Body of pancreas (tissue), 4 donors: ENCODE measurements at regions of chr10 and their contacts with region 1.

Region 1: GRCh38 chr10:27319752-27320561 is 79.4 kb upstream of the ACBD5 start:
- DNase-seq: peak; percentile 27 to 74 (median 52)
- ATAC-seq: peak; percentile 83
- H3K4me3 ChIP-seq: peak overlapping the region in 1 of 2 donors; percentile 12
- H3K27ac ChIP-seq: peak overlapping the region in 1 of 4 donors; percentile 48
- H3K4me1 ChIP-seq: no peaks in the 10 kb centered on the region
- H3K27me3 ChIP-seq: no peaks in the 10 kb centered on the region
- CTCF ChIP-seq: no peak
- POLR2A ChIP-seq: peak in 1 of 3 donors; percentile 15

Region 2: DNA sequence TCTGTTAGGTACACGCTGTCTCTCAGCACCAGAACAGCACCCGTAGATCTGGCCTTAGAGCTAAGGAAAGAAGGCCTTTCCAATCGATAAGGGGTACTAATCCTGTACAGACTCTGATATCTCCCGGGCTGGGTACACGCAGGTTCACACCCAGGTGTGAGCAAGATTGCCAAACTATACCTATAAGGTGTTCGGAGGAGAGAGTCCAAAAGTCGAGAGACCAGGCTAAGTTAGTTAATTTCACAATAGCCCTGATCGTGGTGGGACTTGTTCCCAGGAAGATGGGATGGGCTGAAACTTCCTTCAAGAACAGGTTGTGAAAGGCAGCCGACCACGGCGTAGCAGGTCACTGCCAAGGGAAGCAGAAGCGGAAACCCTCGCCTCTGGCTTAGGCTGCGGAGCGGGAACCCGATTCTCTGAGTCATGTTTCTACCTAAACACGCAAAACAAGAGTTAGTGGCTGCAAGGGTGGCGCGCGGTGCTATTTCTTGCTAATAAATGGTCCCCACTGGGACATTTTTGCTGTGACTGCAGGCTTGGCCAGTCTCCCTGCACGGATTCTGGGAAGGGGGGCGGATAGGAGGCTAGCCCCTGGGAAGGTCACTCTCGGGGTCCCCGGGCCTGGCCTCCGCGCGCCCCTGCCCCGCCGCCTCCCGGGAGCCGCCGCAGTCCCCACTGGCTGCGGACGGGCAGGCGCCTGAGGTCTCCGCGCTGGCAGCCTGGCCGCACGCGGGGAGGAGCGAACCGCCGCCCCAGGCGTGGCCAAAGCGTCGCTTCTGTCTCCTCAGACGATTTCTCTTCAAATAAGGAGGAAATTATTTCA is 697.9 kb before region 1 on chr10:
- intact Hi-C with region 1: loop called (anchors 10 kb)
- DNase-seq: peak; percentile 34 to 68 (median 53)
- ATAC-seq: peak; percentile 80
- H3K4me3 ChIP-seq: peak overlapping the region in 1 of 2 donors; percentile 27
- H3K27ac ChIP-seq: peak overlapping the region in 2 of 4 donors; percentile 13 to 58
- H3K4me1 ChIP-seq: peaks cover 6% of the 10 kb centered on the region
- H3K27me3 ChIP-seq: no peaks in the 10 kb centered on the region
- CTCF ChIP-seq: no peak
- POLR2A ChIP-seq: no peak

Region 3: DNA sequence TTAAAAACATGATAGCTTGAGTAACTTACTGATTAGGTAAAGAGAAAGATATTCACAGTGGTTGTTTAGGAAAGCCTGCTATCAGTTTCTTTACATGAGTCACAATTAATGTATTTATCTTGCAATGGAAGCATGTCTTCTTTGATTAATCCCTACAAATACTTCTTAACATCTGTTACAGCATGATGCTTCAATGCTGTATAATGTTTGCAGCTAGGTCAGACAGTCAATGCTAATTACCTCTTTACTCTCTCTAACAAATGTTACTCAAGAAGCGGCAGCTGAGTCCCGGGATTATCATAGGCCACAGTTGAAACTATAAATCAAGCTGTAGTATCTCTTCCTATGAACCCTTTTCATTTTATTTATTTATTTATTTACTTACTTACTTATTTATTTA is 112.6 kb before region 1 on chr10:
- intact Hi-C with region 1: no loop called
- DNase-seq: no peak
- ATAC-seq: no peak
- H3K4me3 ChIP-seq: no peak overlapping the region
- H3K27ac ChIP-seq: no peak overlapping the region
- H3K4me1 ChIP-seq: no peaks in the 10 kb centered on the region
- H3K27me3 ChIP-seq: no peaks in the 10 kb centered on the region
- CTCF ChIP-seq: no peak
- POLR2A ChIP-seq: no peak

Region 4: GRCh38 chr10:27457966-27458365 is 138.0 kb after region 1 on chr10:
- intact Hi-C with region 1: no loop called
- DNase-seq: no peak
- ATAC-seq: no peak
- H3K4me3 ChIP-seq: no peak overlapping the region
- H3K27ac ChIP-seq: no peak overlapping the region
- H3K4me1 ChIP-seq: no peaks in the 10 kb centered on the region
- H3K27me3 ChIP-seq: no peaks in the 10 kb centered on the region
- CTCF ChIP-seq: no peak
- POLR2A ChIP-seq: no peak